Activated CD8-positive, alpha-beta memory T cell treated with anti-CD3 and anti-CD28 coated beads, Interleukin-2, amount 10 ng/mL, durations not matched to agents 7 days and 5 days (primary cell): ENCODE measurements at regions of chr2 and their contacts with region 1.

Region 1: GRCh38 chr2:152635635-152636298 is 81.5 kb downstream of the PRPF40A start:
- DNase-seq: peak; percentile 72
- ATAC-seq: peak; percentile 76
- H3K4me3 Mint-ChIP-seq: no peak overlapping the region
- H3K27ac Mint-ChIP-seq: no peak overlapping the region
- H3K4me1 Mint-ChIP-seq: no peaks in the 10 kb centered on the region
- H3K27me3 Mint-ChIP-seq: peaks cover 2% of the 10 kb centered on the region

Region 2: GRCh38 chr2:152036611-152037469 is 598.9 kb before region 1 on chr2:
- CTCF ChIA-PET with region 1: interaction called, 20 read pairs
- DNase-seq: peak; percentile 72
- ATAC-seq: peak; percentile 67
- H3K4me3 Mint-ChIP-seq: no peak overlapping the region
- H3K27ac Mint-ChIP-seq: no peak overlapping the region
- H3K4me1 Mint-ChIP-seq: no peaks in the 10 kb centered on the region
- H3K27me3 Mint-ChIP-seq: no peaks in the 10 kb centered on the region

Region 3: GRCh38 chr2:152175458-152176325 is 460.1 kb before region 1 on chr2 and contains the start of gene STAM2:
- CTCF ChIA-PET with region 1: interaction called, 37 read pairs
- DNase-seq: peak; percentile 94
- ATAC-seq: peak; percentile 90
- H3K4me3 Mint-ChIP-seq: peak within 1 kb of the TSS; percentile 97
- H3K27ac Mint-ChIP-seq: peak within 1 kb of the TSS; percentile 99
- H3K4me1 Mint-ChIP-seq: peaks cover 24% of the 10 kb centered on the region
- H3K27me3 Mint-ChIP-seq: no peaks in the 10 kb centered on the region
- total RNA-seq, gene STAM2: 14.1 to 15.8 TPM

Region 4: DNA sequence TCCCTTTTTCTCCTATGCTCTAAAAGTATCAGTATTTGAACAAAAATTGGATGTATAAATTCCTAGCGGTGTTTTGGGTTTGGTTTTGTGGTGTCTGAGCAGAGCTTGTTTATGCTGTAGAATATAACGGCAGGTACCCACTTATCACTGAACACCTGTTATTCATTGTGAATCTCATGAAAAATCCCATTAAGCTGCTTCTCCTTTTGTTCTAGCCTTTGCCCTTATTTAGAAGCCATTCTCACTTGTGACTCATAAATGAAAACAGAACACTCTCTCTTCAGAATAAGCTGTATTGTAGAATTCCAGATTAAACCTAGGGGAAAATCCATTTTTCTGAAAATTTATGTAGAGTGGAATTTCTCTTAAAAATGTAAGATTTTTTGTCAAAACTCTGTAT is 22.5 kb before region 1 on chr2:
- CTCF ChIA-PET with region 1: interaction called, 14 read pairs
- DNase-seq: no peak
- ATAC-seq: no peak
- H3K4me3 Mint-ChIP-seq: no peak overlapping the region
- H3K27ac Mint-ChIP-seq: no peak overlapping the region
- H3K4me1 Mint-ChIP-seq: peaks cover 19% of the 10 kb centered on the region
- H3K27me3 Mint-ChIP-seq: peaks cover 18% of the 10 kb centered on the region

Region 5: GRCh38 chr2:152648336-152648735 is 12.6 kb after region 1 on chr2:
- CTCF ChIA-PET with region 1: interaction called, 43 read pairs
- DNase-seq: no peak
- ATAC-seq: no peak
- H3K4me3 Mint-ChIP-seq: no peak overlapping the region
- H3K27ac Mint-ChIP-seq: no peak overlapping the region
- H3K4me1 Mint-ChIP-seq: no peaks in the 10 kb centered on the region
- H3K27me3 Mint-ChIP-seq: no peaks in the 10 kb centered on the region